AG04449 (cell line): ENCODE measurements at regions of chr16 and their contacts with region 1.

Region 1: DNA sequence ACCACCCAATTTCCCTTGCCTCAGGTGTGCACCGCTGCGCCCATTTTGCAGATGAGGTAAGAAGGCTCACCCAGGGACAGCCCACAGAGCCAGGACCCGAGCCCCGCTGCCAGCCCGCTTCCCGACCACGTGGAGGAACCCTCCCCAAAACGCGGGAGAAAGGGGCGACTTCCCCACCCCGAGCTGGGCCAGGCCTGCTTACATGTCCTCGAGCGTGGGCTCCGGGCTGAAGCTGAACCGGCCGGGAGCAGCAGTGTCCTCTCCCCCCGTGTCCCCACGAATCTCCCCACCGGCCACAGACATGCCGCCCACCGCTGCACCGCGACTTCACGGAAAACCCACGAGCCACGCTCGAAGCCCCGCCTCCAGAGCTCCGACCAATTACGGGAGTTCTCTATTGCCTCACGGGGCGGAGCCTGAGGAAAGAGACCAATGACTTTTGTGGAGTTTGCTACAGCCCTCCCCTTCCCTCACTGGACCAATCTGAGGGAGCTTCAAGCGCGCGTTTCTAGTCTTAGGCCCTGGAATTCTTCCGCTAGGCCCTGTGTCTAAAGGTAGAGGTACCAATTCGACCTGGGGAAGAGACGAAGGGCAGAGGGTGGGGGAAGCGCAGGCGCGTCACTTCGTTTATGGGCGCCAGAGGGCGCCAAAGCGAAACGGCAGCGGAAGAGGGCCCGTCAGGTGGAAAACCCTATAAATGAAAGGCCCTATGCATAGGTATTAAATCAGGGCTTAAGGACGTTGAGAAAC is at the start of gene DCTPP1:
- DNase-seq: peak; percentile 91
- H3K4me3 ChIP-seq: peak within 1 kb of the TSS; percentile 94
- CTCF ChIP-seq: peak; percentile 71

Region 2: GRCh38 chr16:30417529-30418349 is 12.1 kb before region 1 on chr16:
- CTCF ChIA-PET with region 1: interaction called, 35 read pairs
- POLR2A ChIA-PET with region 1: interaction called, 5 read pairs
- DNase-seq: peak; percentile 33
- H3K4me3 ChIP-seq: peak overlapping the region; percentile 62
- CTCF ChIP-seq: peak; percentile 23

Region 3: DNA sequence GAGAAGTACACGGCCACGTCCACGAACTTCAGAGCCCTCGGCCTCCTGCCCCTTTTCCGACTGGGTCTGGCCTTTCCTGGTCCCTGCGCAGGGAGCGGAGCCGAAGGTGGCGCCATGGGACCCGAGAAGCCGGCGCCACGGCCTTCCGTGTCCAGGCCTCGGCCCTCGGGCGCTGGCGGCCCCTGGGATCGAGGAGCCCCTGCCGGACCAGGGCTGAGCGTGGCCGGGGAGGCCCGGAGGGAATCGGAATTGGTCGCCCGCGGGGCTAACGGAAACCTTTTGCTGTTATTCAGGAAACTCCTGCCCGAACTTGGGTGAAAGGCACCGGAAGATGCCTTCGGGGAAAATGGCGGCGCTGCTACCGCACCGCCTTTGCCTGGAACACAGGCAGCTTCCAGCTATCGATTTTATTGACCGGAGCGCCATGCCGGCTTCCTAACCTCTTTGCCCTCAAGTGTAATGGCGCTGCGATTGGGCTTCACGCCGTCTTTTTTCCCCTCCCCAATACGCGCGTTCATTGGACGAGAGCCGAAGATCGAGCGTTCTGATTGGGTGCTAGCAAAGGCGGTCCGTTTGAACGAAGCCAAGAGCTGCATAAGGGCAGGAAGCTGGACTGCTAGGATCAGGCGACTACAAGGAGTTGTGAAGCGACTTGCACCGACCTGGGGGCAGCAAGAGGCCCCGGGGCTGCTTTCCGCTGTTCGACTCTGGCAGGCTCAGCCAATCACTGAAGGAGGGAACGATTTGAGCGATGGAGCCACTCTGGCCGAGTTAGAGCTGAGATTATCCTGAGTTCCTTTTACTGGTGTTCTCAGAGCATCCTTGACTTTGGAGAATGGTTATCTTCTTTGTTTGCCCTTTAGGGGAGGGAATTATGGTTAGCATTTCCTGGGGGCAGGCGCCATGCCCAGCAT is 180.3 kb after region 1 on chr16 and contains the start of gene ZNF689:
- CTCF ChIA-PET with region 1: interaction called, 10 read pairs
- POLR2A ChIA-PET with region 1: no interaction called
- DNase-seq: peak; percentile 78
- H3K4me3 ChIP-seq: peak within 1 kb of the TSS; percentile 76
- CTCF ChIP-seq: no peak